Endothelial cell of umbilical vein (primary cell): ENCODE measurements at regions of chr1 and their contacts with region 1.

Region 1: DNA sequence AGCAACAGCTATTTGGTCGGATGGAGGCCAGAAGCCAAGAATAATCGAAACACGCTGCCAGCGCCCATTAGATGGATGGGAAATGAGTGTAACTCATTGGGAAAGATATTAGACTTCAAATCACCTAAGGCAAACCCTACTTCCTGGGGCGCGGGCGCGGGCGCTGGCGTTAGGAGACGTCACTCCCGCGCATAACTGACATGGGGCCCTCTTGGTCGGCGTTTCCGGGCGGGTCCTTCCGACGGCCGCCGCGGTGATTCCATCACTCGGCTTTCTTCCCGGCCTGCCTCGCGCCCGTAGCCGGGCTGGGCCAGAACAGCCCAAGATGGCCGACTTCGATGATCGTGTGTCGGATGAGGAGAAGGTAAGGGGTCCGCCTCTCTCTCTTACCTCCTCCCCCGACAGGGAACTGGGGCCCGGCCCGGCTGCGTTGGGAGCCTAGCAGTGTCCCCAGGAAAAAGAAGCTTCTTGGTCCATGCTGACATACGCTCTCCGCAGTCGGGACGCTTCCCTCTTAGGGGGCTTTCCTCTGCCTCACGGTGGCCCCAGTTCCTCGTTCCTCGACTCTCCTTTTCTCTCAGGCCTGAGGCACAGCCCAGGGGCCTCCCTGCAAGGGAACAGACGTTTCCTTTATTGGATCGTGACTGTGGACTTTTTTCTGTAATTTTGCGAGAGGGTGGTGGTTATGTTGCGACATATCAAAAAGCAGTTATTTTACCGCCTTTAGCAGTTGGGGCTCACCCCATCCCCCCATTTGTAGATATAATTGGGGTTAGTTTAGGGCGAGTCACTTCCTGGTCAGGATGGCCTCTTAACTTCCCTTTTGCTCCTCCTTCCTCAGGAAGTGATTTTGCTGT is at the start of gene CAPZA1:
- DNase-seq: peak; percentile 94
- H3K4me3 ChIP-seq: peak within 1 kb of the TSS; percentile 94 to 98 (median 98)
- H3K27ac ChIP-seq: peak within 1 kb of the TSS; percentile 91
- H3K4me1 ChIP-seq: peaks cover 32% of the 10 kb centered on the region
- H3K27me3 ChIP-seq: no peaks in the 10 kb centered on the region
- CTCF ChIP-seq: no peak
- POLR2A ChIP-seq: peak; percentile 98
- total RNA-seq, gene CAPZA1: 177 and 183 TPM in 2 replicates

Region 2: DNA sequence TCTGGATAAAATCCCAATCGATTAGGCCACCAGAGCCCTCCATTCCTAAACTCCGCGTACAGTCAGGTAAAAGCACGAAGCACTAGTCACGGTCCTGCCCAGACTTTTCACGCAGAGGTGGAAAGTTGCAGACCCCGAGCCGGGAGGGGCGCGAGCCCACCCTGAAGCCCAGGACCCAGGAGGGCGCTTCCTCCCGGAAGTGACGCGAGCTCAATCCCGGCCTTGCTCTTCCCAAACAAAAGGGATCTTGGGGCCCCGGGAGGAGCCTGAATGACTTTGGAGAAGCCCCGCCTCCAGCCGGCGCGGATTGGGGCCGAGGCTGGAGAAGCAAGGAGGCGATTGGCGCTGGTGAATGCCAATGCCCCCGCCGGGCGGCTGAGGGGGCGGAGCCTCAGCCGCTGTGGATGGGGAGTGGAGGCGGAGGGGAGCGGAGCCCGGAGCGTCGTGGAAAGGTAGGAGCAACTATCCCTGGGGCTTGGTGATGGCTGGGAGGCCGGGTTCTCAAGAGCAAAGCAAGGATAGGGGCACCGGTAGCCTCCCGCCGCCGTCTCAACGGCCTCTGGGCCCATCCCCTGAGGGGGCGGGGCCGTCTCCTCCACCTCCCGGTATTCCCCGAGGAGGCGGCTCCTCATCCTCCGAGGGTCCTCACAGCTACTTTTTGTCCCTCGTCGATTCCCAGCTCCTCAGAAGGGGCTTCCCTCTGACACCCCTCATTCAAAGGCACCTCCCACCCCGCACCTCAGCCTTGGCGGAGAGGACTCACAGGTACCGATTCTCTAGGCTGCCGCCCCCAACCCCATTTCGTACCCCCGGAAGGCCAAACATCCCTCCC is 223.7 kb before region 1 on chr1 and contains the start of gene CTTNBP2NL:
- CTCF ChIA-PET with region 1: interaction called, 20 read pairs
- POLR2A ChIA-PET with region 1: interaction called, 5 read pairs
- dilution Hi-C with region 1: no loop called
- intact Hi-C with region 1: loop called (anchors 1 kb)
- DNase-seq: peak; percentile 95
- H3K4me3 ChIP-seq: peak within 1 kb of the TSS; percentile 86 to 94 (median 91)
- H3K27ac ChIP-seq: peak within 1 kb of the TSS; percentile 97
- H3K4me1 ChIP-seq: peaks cover 64% of the 10 kb centered on the region
- H3K27me3 ChIP-seq: no peaks in the 10 kb centered on the region
- CTCF ChIP-seq: no peak
- POLR2A ChIP-seq: peak; percentile 91
- total RNA-seq, gene CTTNBP2NL: 94.4 and 96.4 TPM in 2 replicates

Region 3: GRCh38 chr1:112544011-112544688 is 75.6 kb before region 1 on chr1:
- CTCF ChIA-PET with region 1: interaction called, 6 read pairs
- POLR2A ChIA-PET with region 1: interaction called, 9 read pairs
- dilution Hi-C with region 1: no loop called
- intact Hi-C with region 1: loop called (anchors 1 kb)
- DNase-seq: peak; percentile 92
- H3K4me3 ChIP-seq: peak overlapping the region in 1 of 3 experiments; percentile 27
- H3K27ac ChIP-seq: peak overlapping the region; percentile 99
- H3K4me1 ChIP-seq: peaks cover 27% of the 10 kb centered on the region
- H3K27me3 ChIP-seq: no peaks in the 10 kb centered on the region
- CTCF ChIP-seq: no peak
- POLR2A ChIP-seq: peak; percentile 32

Region 4: GRCh38 chr1:112674439-112674985 is 54.8 kb after region 1 on chr1 and contains the start of gene MOV10:
- CTCF ChIA-PET with region 1: interaction called, 14 read pairs
- POLR2A ChIA-PET with region 1: interaction called, 4 read pairs
- dilution Hi-C with region 1: no loop called
- intact Hi-C with region 1: loop called (anchors 1 kb)
- DNase-seq: peak; percentile 81
- H3K4me3 ChIP-seq: peak within 1 kb of the TSS; percentile 67 to 88 (median 82)
- H3K27ac ChIP-seq: peak within 1 kb of the TSS; percentile 69
- H3K4me1 ChIP-seq: peaks cover 21% of the 10 kb centered on the region
- H3K27me3 ChIP-seq: no peaks in the 10 kb centered on the region
- CTCF ChIP-seq: no peak
- POLR2A ChIP-seq: peak; percentile 56
- total RNA-seq, gene MOV10: 103 and 113 TPM in 2 replicates

Region 5: DNA sequence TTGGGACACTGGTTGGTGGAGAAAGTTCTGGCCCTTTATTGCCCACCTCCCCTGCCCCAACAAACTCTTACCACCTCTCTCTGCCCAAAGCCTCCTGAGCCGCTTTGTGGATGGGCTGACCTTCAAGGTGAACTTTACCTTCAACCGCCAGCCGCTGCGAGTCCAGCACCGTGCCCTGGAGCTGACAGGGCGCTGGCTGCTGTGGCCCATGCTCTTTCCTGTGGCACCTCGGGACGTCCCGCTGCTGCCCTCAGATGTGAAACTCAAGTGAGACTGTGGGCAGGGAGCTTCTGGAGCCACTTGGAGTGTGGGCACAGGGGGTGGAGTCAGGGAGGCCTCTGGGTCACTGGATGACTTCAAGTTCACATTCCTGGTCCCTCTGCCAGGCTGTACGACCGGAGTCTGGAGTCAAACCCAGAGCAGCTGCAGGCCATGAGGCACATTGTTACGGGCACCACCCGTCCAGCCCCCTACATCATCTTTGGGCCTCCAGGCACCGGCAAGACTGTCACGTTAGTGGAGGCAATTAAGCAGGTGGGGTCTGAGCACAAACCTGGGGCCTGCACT is 74.7 kb after region 1 on chr1:
- CTCF ChIA-PET with region 1: no interaction called
- POLR2A ChIA-PET with region 1: no interaction called
- dilution Hi-C with region 1: no loop called
- intact Hi-C with region 1: no loop called
- DNase-seq: no peak
- H3K4me3 ChIP-seq: no peak overlapping the region
- H3K27ac ChIP-seq: no peak overlapping the region
- H3K4me1 ChIP-seq: peaks cover 9% of the 10 kb centered on the region
- H3K27me3 ChIP-seq: no peaks in the 10 kb centered on the region
- CTCF ChIP-seq: no peak
- POLR2A ChIP-seq: no peak

Region 6: GRCh38 chr1:112706908-112707663 is 87.3 kb after region 1 on chr1 and contains the start of gene RHOC:
- CTCF ChIA-PET with region 1: no interaction called
- POLR2A ChIA-PET with region 1: interaction called, 3 read pairs
- dilution Hi-C with region 1: no loop called
- intact Hi-C with region 1: loop called (anchors 1 kb)
- DNase-seq: peak; percentile 88
- H3K4me3 ChIP-seq: peak within 1 kb of the TSS; percentile 81 to 90 (median 89)
- H3K27ac ChIP-seq: peak within 1 kb of the TSS; percentile 88
- H3K4me1 ChIP-seq: peaks cover 40% of the 10 kb centered on the region
- H3K27me3 ChIP-seq: no peaks in the 10 kb centered on the region
- CTCF ChIP-seq: peak; percentile 97 to 98
- POLR2A ChIP-seq: peak; percentile 83
- total RNA-seq, gene RHOC: 652 and 699 TPM in 2 replicates